ENCODE measurements at regions of chr17 and their contacts with region 1.

Region 1: DNA sequence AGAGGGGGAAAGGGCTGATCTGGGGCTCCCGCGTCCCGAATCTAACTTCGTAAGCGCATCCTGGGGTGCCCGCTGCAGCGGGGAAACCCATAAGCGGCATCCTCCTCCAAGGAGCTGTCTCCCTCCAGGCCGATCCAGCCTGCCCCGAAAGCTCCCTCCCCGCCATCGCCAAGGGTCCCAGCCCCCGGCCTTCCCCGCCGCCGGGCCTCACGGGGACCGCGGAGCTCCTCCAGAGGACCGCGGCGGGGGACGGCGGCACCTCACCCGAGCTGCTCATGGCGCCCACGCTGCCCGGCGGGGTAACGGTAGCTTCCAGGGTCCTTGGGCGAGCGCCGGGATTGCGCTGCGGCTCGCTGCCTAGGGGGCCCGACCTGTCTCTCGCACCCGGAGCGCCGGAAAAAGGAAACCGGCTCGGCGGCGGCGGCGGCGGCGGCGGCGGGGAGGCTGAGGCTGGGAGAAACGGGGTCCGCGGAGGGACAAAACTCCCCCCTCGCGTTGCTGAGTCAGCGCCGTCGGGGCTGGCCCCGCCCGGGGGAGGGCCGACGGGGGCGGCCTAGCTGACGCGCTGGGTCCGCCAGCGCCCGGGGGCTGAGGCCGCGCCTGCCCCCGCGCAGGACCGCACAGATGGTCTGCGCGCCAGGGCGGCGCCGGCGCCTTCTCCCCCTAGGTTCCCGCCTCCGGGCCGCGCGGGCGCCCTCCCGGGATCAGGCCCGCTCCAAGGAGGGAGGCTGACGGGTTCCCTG is at the start of gene BLMH:
- DNase-seq: peak in 1 of 2 donors; percentile 89
- H3K4me3 ChIP-seq: peak within 1 kb of the TSS; percentile 86
- H3K27ac ChIP-seq: peak within 1 kb of the TSS; percentile 91 to 96
- H3K4me1 ChIP-seq: peaks cover 2 to 19% of the 10 kb centered on the region in 2 donors
- H3K27me3 ChIP-seq: no peaks in the 10 kb centered on the region
- CTCF ChIP-seq: no peak
- total RNA-seq, gene BLMH: 6.9 TPM

Region 2: DNA sequence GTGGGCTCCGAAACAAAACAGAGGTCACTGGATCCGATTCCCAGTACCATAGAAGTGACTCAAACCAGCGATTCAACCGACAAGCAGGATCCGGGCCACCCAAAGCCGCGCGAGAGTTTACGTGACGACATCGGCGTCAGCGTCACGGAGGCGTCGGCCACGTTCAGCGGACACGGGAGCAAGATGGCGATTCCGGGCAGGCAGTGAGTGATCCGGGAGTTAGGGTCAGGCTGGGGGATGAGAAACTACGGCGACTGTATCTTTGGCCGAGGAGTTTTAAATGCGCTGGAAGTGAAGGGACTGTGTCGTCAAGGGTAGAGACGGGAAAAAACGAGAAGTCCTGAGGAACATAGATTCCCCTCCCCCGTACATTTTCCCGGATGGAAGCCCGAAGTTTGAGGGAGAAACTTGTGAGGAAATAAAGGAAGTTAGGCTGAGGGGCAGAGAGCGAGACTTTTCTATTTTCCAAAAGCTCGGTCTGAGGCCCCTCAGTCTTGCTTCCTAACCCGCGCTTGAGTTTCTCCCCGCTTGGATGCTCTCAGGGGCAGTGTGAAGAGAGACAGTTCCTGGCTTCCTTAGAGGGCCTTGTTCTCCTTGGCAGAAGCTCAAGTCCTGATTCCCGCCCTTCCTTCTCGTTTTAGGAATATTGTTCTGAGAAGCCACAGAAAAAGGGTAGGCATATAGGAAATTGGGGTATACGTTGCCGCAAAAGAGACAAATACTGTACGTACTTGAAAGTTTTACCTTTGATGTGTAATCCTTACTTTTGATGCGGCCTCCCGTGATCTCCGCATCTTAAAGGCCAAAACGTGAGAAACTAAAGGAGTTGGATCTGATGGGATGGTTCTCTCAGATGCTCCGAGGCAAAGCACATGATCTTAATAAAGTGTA is 174.8 kb before region 1 on chr17 and contains the start of gene NSRP1:
- intact Hi-C with region 1: loop called (anchors 5 kb)
- DNase-seq: peak; percentile 82 to 98
- H3K4me3 ChIP-seq: peak within 1 kb of the TSS; percentile 65 to 71
- H3K27ac ChIP-seq: peak within 1 kb of the TSS; percentile 92 to 95
- H3K4me1 ChIP-seq: peaks cover 0 to 12% of the 10 kb centered on the region in 2 donors
- H3K27me3 ChIP-seq: no peaks in the 10 kb centered on the region
- CTCF ChIP-seq: no peak
- total RNA-seq, gene NSRP1: 5.1 TPM